Endothelial cell of umbilical vein (primary cell): ENCODE measurements at regions of chr10 and their contacts with region 1.

Region 1: GRCh38 chr10:128367807-128368206 is 241.6 kb upstream of the MKI67 start:
- DNase-seq: no peak
- H3K4me3 ChIP-seq: no peak overlapping the region
- H3K27ac ChIP-seq: no peak overlapping the region
- H3K4me1 ChIP-seq: no peaks in the 10 kb centered on the region
- H3K27me3 ChIP-seq: no peaks in the 10 kb centered on the region
- CTCF ChIP-seq: no peak
- POLR2A ChIP-seq: no peak

Region 2: DNA sequence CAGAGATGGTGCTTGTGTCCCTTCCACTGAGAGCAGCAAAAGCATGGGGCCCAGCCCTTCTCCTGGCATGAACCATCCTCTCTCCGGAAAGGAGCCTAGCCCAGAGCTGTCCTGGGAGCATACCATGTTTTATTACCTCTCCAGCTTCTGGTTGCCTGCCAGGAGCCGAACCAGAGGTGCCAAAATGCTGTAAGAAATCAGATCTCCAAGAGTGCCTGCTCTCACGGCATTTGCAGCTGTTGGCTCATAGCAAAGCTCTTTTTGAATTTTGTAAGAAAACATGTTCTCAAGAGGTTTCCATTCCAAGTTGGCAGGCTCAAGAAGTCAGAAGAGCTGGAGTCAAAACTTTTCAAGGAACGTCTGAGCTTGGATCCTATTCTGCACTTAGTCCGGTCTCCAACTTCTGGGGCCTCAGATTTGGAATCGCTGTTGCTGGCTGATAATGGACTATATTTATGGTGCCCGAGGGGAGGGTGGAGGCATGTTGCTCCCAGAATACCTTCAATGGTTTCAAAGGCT is 29.9 kb before region 1 on chr10:
- CTCF ChIA-PET with region 1: no interaction called
- POLR2A ChIA-PET with region 1: no interaction called
- dilution Hi-C with region 1: no loop called
- intact Hi-C with region 1: loop called (anchors 1 kb)
- DNase-seq: no peak
- H3K4me3 ChIP-seq: no peak overlapping the region
- H3K27ac ChIP-seq: no peak overlapping the region
- H3K4me1 ChIP-seq: no peaks in the 10 kb centered on the region
- H3K27me3 ChIP-seq: no peaks in the 10 kb centered on the region
- CTCF ChIP-seq: no peak
- POLR2A ChIP-seq: no peak